ENCODE measurements at regions of chr1 and their contacts with region 1.

Region 1: GRCh38 chr1:234772345-234773147 is 162.6 kb upstream of the IRF2BP2 start:
- DNase-seq: peak; percentile 93
- ATAC-seq: peak; percentile 66
- H3K4me3 ChIP-seq: no peak overlapping the region
- H3K27ac ChIP-seq: peak overlapping the region; percentile 73
- H3K4me1 ChIP-seq: peaks cover 61% of the 10 kb centered on the region
- H3K27me3 ChIP-seq: peaks cover 0 to 7% of the 10 kb centered on the region in 2 experiments; a peak in 2 of 5 replicates
- CTCF ChIP-seq: no peak
- EP300 ChIP-seq: peak; percentile 25 to 87; a peak in 2 of 4 replicates
- POLR2A ChIP-seq: 0 out of 4 replicates have a peak, but pooled peaks of 1 of the 2 experiments have one; percentile 28
- RAD21 ChIP-seq: 0 out of 2 replicates have a peak, but pooled peaks have one; percentile 21

Region 2: DNA sequence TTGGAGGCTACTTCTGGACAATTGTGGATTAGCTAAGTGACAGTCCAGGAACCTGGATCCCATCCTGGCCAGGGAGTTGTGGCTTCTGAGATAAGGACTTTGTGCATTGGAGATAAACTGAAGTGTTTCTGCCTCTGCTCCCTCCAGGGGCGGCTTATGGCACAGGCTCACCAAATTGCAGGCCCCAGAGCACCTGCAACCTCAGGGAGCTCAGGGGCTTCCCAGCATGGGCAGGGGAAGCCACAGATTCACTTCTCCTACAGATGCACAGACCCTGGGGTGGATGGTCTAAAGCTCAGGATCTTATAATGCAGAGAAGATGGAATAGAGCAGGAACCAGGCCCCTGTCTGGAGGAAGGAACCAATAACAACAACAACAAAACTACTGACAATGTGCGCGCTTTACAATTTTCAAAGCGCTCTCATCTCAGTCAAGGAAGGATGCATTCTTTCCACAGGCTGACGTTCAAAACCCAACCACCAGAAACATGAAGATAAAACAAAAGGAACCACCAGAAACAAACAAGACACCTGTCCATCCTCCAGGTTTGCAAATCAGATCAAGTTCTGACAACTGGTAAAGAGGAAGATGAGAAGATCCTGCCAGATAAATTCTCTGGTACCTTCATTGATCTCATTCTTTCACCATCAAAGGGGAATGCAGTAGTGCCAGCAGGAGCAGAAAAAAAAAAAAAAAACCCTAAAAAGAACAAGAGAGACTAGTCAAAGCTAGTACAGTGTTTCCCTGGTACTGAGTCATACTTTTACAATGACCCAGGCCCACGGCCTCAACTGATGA is 41.6 kb before region 1 on chr1:
- CTCF ChIA-PET with region 1: no interaction called
- POLR2A ChIA-PET with region 1: interaction called, 97 read pairs
- in situ Hi-C with region 1: no loop called
- intact Hi-C with region 1: loop called (anchors 1 kb)
- DNase-seq: peak; percentile 59
- ATAC-seq: peak; percentile 47
- H3K4me3 ChIP-seq: no peak overlapping the region
- H3K27ac ChIP-seq: peak overlapping the region; percentile 36
- H3K4me1 ChIP-seq: peaks cover 96% of the 10 kb centered on the region
- H3K27me3 ChIP-seq: no peaks in the 10 kb centered on the region
- CTCF ChIP-seq: no peak
- EP300 ChIP-seq: peak in 1 of 2 experiments; percentile 9; a peak in 1 of 4 replicates
- POLR2A ChIP-seq: no peak
- RAD21 ChIP-seq: no peak

Region 3: DNA sequence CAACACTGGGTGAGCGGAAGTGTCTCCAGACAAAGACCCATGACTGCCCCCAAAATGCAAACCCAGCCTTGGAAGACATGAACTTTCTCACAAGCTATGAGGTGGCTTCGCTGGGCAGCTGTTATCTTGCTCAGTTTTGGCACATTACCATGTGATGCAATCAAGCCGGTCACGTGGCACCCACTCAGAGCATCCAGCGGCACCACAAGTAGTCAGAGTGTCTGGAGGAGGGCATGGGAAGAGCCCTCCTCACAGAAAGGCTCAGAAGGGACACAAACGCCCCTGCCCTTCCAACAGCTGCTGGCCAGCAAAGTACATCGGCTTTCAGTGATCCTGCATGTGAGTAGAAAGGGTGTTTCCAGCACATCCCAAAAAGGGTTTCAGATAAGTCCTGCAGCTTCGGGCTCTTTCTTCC is 17.1 kb before region 1 on chr1:
- CTCF ChIA-PET with region 1: no interaction called
- POLR2A ChIA-PET with region 1: interaction called, 21 read pairs
- in situ Hi-C with region 1: no loop called
- intact Hi-C with region 1: no loop called
- DNase-seq: no peak
- ATAC-seq: no peak
- H3K4me3 ChIP-seq: no peak overlapping the region
- H3K27ac ChIP-seq: no peak overlapping the region
- H3K4me1 ChIP-seq: peaks cover 55% of the 10 kb centered on the region
- H3K27me3 ChIP-seq: no peaks in the 10 kb centered on the region
- CTCF ChIP-seq: no peak
- EP300 ChIP-seq: no peak
- POLR2A ChIP-seq: no peak
- RAD21 ChIP-seq: no peak

Region 4: GRCh38 chr1:234842726-234843641 is 70.4 kb after region 1 on chr1:
- CTCF ChIA-PET with region 1: no interaction called
- POLR2A ChIA-PET with region 1: no interaction called
- in situ Hi-C with region 1: loop called (anchors 5 kb)
- intact Hi-C with region 1: no loop called
- DNase-seq: no peak
- ATAC-seq: no peak
- H3K4me3 ChIP-seq: no peak overlapping the region
- H3K27ac ChIP-seq: no peak overlapping the region
- H3K4me1 ChIP-seq: peaks cover 30% of the 10 kb centered on the region
- H3K27me3 ChIP-seq: no peaks in the 10 kb centered on the region
- CTCF ChIP-seq: no peak
- EP300 ChIP-seq: no peak
- POLR2A ChIP-seq: no peak
- RAD21 ChIP-seq: no peak

Measured in HepG2 (cell line).